ENCODE measurements at regions of chr3 and their contacts with region 1.

Region 1: DNA sequence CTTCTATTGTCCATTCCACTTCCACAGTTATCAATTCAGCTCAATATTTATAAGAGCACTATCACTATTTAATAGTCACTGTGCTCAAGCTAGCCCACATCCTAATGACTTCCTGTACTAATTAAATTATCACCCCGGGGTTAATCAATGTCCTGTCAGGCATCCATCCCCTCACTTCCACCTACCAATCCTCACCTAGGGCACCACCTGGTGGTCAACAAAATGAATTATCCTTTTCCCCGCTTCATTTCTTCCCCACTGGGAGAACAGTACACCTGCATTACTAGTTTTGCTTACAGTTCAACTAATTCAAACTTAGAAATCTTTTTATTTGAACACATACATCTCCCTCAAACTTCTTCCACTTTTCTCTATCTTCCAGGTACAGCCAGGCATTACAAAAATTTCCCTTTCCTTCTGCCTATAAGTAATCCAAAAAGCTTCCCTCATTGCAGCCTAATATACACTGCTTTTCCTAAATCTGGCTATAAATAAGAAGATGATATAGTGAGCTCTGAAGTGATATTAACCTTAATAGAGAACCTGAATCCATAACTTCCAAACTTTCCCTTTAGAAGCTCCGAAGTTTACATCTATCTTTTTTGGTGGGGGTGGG is 68.5 kb downstream of the TMCC1 start:
- DNase-seq: peak in 1 of 2 donors; percentile 16
- ATAC-seq: peak; percentile 69

Region 2: DNA sequence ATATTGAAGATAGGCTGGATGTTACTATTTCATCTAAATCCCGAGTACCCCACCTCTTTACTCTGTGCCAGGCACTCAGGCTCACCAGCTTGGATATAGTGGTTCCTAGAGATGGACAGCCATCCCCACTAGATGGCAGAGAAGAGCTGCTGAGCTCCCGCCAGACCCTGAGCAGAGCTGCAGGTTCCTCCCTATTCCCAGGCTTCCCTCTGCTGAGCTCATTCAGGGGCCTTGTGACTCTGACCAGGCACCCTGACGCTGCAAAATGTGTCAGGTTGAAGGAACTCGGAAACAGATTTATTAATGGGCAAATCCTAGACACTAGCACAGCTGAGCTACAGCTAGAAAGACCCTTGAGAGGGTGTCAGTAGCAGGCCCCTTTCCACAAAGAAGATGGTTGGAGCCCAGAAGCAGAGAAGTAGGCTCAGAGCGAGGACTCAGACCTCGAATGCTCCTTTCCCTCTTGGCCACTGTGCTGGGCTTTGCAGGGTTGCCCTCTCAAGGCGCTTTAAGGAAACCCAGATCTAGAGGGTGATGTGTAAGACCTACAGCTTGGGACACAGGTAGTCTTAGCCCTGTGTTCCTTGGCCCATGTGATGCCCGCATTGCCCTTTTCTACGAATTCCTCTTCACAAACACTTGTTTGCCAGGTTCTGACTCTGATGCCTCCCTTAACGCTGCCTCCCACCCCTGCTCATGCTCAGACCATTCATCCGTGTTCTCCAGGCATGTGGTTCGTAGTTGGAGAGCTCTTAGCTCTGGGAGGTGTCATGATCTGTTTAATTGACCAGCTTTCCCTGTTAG is 334.6 kb before region 1 on chr3:
- intact Hi-C with region 1: loop called (anchors 10 kb)
- DNase-seq: peak; percentile 70 to 81
- ATAC-seq: peak; percentile 97

Region 3: DNA sequence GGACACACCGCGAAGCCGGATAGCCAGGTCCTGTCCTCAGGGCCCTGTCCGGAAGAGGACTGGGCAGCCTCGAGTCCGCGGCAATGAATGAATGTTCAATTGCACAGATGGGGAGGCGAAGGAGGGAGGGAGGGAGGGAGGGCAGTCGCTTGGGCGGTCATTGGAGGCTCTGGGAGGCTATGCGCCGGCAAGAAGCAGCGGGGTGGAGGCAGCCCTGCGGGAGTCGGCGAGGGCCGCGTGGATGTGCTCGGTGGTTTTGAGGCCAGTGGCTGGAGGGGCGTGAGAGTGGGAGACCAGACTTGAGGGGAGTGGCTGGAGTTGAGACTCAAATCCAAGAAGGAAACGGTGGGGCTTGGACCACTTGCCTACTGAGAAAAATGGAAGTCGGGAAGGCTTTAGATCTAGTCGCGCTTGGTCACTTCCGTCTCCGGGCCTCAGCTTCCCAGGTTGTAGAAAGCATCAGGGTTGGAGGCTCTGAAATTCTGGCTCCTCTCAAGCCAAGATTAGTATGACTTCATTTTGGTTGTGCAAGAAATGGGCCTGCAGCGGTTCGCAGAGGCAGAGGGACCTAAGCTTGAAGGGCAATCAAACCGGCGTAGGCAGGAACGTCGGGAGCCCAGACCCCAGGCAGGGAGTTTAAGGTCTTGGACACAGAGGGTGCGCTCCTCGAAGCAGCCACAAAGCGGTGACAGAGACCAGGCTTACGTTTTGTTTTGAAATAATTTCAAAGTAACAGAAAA is 197.4 kb before region 1 on chr3:
- intact Hi-C with region 1: loop called in 1 of 2 experiments (anchors 5 kb)
- DNase-seq: peak; percentile 59 to 73
- ATAC-seq: peak; percentile 44

Region 4: DNA sequence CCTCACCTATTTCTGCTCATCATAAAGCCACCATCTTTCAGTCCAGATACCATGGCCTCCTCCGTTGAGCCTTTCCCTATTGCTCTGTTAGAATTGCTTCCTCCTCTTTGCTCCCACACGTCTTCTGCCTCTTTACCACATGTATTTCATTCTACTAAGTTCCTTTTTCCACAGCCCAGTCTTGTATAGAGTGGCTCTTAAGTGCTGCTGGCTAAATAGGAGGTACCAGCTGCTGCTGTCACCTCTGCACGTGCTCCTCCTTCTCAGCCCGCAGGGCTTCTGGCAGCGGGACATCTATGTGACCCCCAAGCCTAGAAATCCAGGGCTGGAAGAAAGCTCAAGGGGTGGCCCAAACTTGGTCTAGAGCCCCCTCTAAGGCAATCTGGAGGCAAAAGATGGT is 179.7 kb before region 1 on chr3:
- intact Hi-C with region 1: loop called (anchors 2 to 10 kb)
- DNase-seq: no peak
- ATAC-seq: no peak

Region 5: DNA sequence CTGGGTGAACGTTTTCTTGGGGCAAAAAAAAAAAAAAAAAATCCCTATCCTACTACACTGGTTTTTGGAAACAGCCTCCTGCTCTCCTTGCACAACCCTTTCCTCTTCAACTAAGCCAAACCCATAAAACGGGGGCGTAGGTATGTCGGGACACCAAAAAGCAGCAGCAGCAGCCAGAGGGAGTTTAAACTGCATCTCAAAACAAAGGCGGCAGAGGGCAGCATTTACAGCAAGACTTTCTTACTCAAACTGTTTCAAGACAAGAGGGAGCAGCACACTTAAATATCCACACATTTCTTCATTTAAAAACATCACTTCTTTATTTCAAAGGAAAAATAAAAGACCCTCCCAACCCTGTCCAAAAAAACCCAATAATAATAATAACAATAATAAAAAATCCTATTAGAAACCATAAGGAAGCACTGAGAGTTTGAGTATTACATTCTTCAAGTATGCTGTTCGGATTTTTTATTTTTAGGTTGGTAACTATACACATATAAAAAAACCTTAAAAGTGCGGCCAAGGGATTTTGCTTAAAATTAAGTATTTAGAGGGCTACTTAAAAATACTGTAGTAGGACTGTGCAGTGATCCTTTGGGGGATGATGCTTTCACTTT is 174.7 kb before region 1 on chr3:
- intact Hi-C with region 1: loop called (anchors 2 to 10 kb)
- DNase-seq: peak; percentile 44 to 69
- ATAC-seq: peak; percentile 77

Region 6: GRCh38 chr3:129934234-129935123 is 109.4 kb after region 1 on chr3:
- intact Hi-C with region 1: loop called in 1 of 2 experiments (anchors 10 kb)
- DNase-seq: peak in 1 of 2 donors; percentile 31
- ATAC-seq: no peak